ENCODE measurements at regions of chr5 and their contacts with region 1.

Region 1: DNA sequence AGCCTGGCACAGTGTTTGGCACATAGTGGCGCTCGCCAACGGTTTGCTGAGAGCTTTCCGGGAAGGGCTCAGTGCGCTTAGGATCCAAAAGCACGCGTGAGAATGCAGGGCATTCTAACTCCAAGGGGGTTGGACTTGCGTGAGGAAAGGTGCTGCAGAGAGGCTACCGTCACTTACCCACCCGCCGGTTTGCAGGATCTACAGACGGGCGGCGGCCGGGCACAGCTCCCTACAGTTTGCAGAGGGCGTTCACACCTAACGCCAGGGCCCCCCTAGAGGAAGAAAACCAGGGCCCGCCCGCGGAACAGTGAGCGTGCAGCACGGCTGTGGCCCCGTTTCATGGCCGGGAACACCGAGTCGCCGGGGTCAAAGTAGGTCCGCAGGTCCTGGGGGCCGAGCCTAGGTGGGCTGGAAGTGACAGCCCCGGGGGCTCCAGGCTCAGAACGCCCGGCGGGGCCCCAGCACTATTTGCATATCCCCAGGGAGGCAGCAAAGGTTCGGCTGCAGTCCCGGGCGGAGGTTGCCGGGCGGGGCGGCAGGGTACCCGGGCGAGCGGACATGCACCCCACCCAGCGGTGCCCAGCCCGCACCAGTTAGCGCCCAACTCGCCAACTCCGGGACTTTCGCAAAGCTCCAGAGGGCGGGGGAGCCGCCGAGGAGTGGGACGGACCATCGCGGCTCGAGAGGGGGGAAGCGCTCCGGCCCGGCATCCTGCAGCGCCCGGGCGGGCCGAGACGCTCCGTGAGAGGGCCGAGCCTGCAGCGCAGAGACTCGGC is 526 bp upstream of the GALNT10 start:
- ATAC-seq: peak; percentile 78 to 90 (median 87)
- H3K4me3 ChIP-seq: peak overlapping the region; percentile 84 to 98 (median 92)
- H3K27ac ChIP-seq: peak overlapping the region; percentile 86 to 90
- H3K4me1 ChIP-seq: peaks cover 19 to 24% of the 10 kb centered on the region in 2 donors

Region 2: GRCh38 chr5:154002093-154002492 is 187.9 kb before region 1 on chr5:
- in situ Hi-C with region 1: no loop called
- ATAC-seq: peak in 3 of 8 experiments; percentile 47 to 93 (median 80)
- H3K4me3 ChIP-seq: no peak overlapping the region
- H3K27ac ChIP-seq: no peak overlapping the region
- H3K4me1 ChIP-seq: no peaks in the 10 kb centered on the region

Region 3: GRCh38 chr5:154072414-154073171 is 117.4 kb before region 1 on chr5:
- in situ Hi-C with region 1: loop called in 5 of 9 experiments (anchors 10 to 25 kb)
- ATAC-seq: peak; percentile 97 to 99 (median 99)
- H3K4me3 ChIP-seq: no peak overlapping the region
- H3K27ac ChIP-seq: no peak overlapping the region
- H3K4me1 ChIP-seq: peaks cover 9% of the 10 kb centered on the region in 2 donors